K562 (cell line): ENCODE measurements at regions of chr1 and their contacts with region 1.

Region 1: DNA sequence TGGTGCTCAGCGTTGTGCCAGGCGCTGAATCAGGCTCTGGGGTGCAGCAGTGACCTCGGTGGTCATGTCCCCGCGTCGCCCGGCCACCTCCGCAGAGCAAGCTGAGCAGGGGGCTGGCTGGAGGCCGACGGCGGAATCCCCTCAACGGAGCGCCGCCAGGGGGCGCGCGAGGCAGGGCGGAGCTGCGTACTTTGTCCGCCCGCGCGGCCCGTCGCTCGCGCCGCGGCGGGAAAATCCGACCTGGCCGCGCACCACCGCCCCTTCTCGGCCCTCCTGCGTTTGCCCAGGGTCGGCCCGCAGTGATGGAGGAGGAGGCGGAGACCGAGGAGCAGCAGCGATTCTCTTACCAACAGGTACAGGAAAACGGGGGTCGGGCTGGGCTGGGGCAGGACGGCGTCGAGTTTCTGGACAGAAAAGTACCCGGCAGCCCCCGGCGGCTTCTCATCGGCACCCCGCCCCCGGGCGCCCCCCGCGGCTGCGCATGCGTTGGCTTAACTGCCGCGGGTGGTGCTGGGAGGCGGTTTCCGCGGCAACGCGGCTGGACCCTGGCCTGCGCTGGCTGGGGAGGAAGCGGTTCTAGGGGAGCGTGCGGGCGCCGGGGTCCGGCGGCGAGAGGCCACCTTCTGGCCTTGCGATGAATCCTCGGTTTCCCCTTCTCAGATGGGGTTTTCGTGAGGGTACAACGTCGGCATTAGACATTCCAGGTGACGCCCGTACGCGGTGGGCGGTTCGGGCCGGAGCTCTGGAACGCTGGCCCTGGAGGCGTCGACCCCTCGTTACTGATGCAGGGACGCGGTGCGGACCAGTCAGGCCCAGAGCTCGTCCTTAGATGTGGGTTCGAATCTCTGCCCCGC is at the start of gene CENPS:
- DNase-seq: peak; percentile 97 to 100 (median 100)
- ATAC-seq: peak; percentile 96
- H3K4me3 ChIP-seq: peak within 1 kb of the TSS; percentile 60
- H3K27ac ChIP-seq: peak within 1 kb of the TSS; percentile 81
- H3K4me1 ChIP-seq: peaks cover 9 to 21% of the 10 kb centered on the region in 2 experiments; a peak in 4 of 5 replicates
- H3K27me3 ChIP-seq: no peaks in the 10 kb centered on the region
- CTCF ChIP-seq: peak; percentile 96 to 97 (median 97)
- EP300 ChIP-seq: peak; percentile 41; the same call in 1 of the 2 replicates
- POLR2A ChIP-seq: peak; percentile 81
- RAD21 ChIP-seq: peak; percentile 92 to 93
- polyA plus RNA-seq, gene CENPS: 10.2 to 16.4 TPM

Region 2: DNA sequence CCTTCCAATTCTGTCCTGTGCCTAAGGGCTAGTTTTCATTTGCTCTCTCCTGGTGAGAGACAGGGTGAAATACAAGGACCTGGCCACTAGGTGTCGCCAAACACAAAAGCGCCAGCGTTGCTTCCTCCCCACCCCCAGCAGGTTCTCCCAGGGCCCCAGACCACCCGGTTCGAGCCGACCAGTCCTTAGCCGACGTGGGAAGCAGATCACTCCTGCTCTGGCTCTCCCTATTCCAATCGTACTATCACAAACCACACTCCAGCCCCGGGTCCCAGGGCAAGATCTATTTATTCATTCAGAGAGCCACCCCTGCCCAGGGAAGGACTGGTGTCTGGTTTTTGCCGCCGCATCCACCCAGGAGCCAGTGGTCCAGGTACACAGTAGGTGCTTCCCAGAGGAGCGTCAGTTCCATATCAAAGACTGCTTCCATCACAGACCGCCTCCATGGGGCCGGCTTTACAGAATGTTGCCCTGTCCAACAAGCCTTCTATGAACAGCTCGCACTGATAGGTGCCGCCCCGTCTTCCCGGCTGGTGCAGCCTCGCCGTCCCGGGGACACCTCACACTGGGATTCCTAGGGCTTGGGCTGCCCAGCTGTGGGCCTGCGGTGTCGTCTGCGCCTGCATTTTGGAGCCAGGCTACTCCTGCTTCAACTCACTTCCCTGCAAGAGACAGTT is 555.3 kb before region 1 on chr1:
- CTCF ChIA-PET with region 1: interaction called, 11 read pairs
- POLR2A ChIA-PET with region 1: no interaction called
- in situ Hi-C with region 1: loop called (anchors 5 kb)
- intact Hi-C with region 1: loop called (anchors 2 kb)
- DNase-seq: peak; percentile 88 to 98 (median 97)
- ATAC-seq: peak; percentile 96
- H3K4me3 ChIP-seq: no peak overlapping the region
- H3K27ac ChIP-seq: no peak overlapping the region
- H3K4me1 ChIP-seq: peaks cover 5 to 25% of the 10 kb centered on the region in 2 experiments; a peak in 4 of 5 replicates
- H3K27me3 ChIP-seq: no peaks in the 10 kb centered on the region
- CTCF ChIP-seq: peak; percentile 95 to 99 (median 98)
- EP300 ChIP-seq: no peak
- POLR2A ChIP-seq: no peak
- RAD21 ChIP-seq: peak; percentile 94 to 98

Region 3: GRCh38 chr1:10032590-10033358 is 397.7 kb before region 1 on chr1 and contains the start of gene UBE4B:
- CTCF ChIA-PET with region 1: no interaction called
- POLR2A ChIA-PET with region 1: no interaction called
- in situ Hi-C with region 1: no loop called
- intact Hi-C with region 1: loop called (anchors 10 kb)
- DNase-seq: peak; percentile 98 to 99 (median 99)
- ATAC-seq: peak; percentile 93
- H3K4me3 ChIP-seq: peak within 1 kb of the TSS; percentile 62
- H3K27ac ChIP-seq: peak within 1 kb of the TSS; percentile 97
- H3K4me1 ChIP-seq: peaks cover 3 to 14% of the 10 kb centered on the region in 2 experiments; a peak in 2 of 5 replicates
- H3K27me3 ChIP-seq: no peaks in the 10 kb centered on the region
- CTCF ChIP-seq: peak; percentile 91 to 98 (median 95)
- EP300 ChIP-seq: peak; percentile 53; the same call in 1 of the 2 replicates
- POLR2A ChIP-seq: peak; percentile 89
- RAD21 ChIP-seq: peak; percentile 81 to 84
- polyA plus RNA-seq, gene UBE4B: 11.7 to 24.9 TPM

Region 4: DNA sequence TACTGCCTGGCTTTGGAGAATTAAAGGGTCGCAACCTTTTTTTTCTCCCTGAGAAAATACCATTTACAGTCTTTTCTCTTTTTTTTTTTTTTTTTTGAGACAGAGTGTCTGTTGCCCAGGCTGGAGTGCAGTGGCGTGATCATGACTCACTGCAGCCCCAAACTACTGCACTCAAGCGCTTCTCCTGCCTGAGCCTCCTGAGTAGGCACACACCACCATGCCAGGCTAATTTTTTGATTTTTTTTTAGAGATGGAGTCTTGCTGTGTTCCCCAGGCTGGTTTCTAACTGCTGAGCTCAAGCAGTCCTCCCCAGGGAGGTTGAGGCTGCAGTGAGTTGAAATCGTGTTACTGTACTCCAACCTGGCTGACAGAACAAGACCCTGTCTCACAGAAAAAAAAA is 373.1 kb before region 1 on chr1:
- CTCF ChIA-PET with region 1: no interaction called
- POLR2A ChIA-PET with region 1: no interaction called
- in situ Hi-C with region 1: no loop called
- intact Hi-C with region 1: no loop called
- DNase-seq: no peak
- ATAC-seq: no peak
- H3K4me3 ChIP-seq: no peak overlapping the region
- H3K27ac ChIP-seq: no peak overlapping the region
- H3K4me1 ChIP-seq: peaks cover 5 to 8% of the 10 kb centered on the region in 2 experiments; a peak in 4 of 5 replicates
- H3K27me3 ChIP-seq: no peaks in the 10 kb centered on the region
- CTCF ChIP-seq: no peak
- EP300 ChIP-seq: no peak
- POLR2A ChIP-seq: no peak
- RAD21 ChIP-seq: no peak

Region 5: DNA sequence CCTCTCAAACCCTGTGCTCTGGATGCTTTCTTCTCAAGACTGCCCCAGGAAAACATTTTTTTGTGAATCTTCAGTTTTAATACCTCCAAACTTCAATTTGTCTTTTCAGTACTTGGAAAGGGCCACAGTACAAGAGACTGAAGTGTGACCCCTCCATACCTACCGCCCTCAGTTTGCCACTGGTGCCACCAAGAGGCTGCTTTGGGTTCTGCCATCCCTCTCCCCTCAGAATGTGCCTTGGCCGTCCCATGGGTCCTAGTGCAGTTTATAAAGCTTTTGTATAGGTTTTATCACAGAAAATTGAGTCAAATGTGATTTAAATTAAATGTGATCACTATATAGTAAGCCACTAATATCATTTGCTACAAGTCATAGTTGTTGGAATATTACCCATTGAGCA is 92.4 kb before region 1 on chr1:
- CTCF ChIA-PET with region 1: no interaction called
- POLR2A ChIA-PET with region 1: no interaction called
- in situ Hi-C with region 1: no loop called
- intact Hi-C with region 1: loop called (anchors 1 kb)
- DNase-seq: peak; percentile 46 to 63 (median 60)
- ATAC-seq: peak; percentile 91
- H3K4me3 ChIP-seq: no peak overlapping the region
- H3K27ac ChIP-seq: no peak overlapping the region
- H3K4me1 ChIP-seq: peaks cover 0 to 9% of the 10 kb centered on the region in 2 experiments; a peak in 2 of 5 replicates
- H3K27me3 ChIP-seq: no peaks in the 10 kb centered on the region
- CTCF ChIP-seq: peak; percentile 78 to 86 (median 82)
- EP300 ChIP-seq: no peak
- POLR2A ChIP-seq: no peak
- RAD21 ChIP-seq: peak; percentile 47 to 73

Region 6: GRCh38 chr1:10415211-10415930 is 15.1 kb before region 1 on chr1:
- CTCF ChIA-PET with region 1: no interaction called
- POLR2A ChIA-PET with region 1: interaction called, 11 read pairs
- in situ Hi-C with region 1: no loop called
- intact Hi-C with region 1: no loop called
- DNase-seq: peak; percentile 72 to 94 (median 82)
- ATAC-seq: peak; percentile 98
- H3K4me3 ChIP-seq: no peak overlapping the region
- H3K27ac ChIP-seq: peak overlapping the region; percentile 96
- H3K4me1 ChIP-seq: peaks cover 8 to 14% of the 10 kb centered on the region in 2 experiments; a peak in 4 of 5 replicates
- H3K27me3 ChIP-seq: no peaks in the 10 kb centered on the region
- CTCF ChIP-seq: 0 out of 6 replicates have a peak, but pooled peaks of 1 of the 3 experiments have one; percentile 1
- EP300 ChIP-seq: peak; percentile 83
- POLR2A ChIP-seq: peak; percentile 75
- RAD21 ChIP-seq: peak; percentile 12 to 27; a peak in 1 of 4 replicates

Region 7: GRCh38 chr1:10867138-10867721 is 436.8 kb after region 1 on chr1:
- CTCF ChIA-PET with region 1: no interaction called
- POLR2A ChIA-PET with region 1: no interaction called
- in situ Hi-C with region 1: no loop called
- intact Hi-C with region 1: loop called (anchors 2 kb)
- DNase-seq: peak; percentile 78 to 93 (median 88)
- ATAC-seq: peak; percentile 97
- H3K4me3 ChIP-seq: peak overlapping the region; percentile 31; the same call in 1 of the 2 replicates
- H3K27ac ChIP-seq: no peak overlapping the region
- H3K4me1 ChIP-seq: peaks cover 0 to 13% of the 10 kb centered on the region in 2 experiments; a peak in 3 of 5 replicates
- H3K27me3 ChIP-seq: peaks cover 40 to 64% of the 10 kb centered on the region in 2 experiments
- CTCF ChIP-seq: peak; percentile 60 to 86 (median 80); a peak in 5 of 6 replicates
- EP300 ChIP-seq: no peak
- POLR2A ChIP-seq: no peak
- RAD21 ChIP-seq: peak; percentile 60 to 84